H1 (cell line): ENCODE measurements at regions of chr7 and their contacts with region 1.

Region 1: DNA sequence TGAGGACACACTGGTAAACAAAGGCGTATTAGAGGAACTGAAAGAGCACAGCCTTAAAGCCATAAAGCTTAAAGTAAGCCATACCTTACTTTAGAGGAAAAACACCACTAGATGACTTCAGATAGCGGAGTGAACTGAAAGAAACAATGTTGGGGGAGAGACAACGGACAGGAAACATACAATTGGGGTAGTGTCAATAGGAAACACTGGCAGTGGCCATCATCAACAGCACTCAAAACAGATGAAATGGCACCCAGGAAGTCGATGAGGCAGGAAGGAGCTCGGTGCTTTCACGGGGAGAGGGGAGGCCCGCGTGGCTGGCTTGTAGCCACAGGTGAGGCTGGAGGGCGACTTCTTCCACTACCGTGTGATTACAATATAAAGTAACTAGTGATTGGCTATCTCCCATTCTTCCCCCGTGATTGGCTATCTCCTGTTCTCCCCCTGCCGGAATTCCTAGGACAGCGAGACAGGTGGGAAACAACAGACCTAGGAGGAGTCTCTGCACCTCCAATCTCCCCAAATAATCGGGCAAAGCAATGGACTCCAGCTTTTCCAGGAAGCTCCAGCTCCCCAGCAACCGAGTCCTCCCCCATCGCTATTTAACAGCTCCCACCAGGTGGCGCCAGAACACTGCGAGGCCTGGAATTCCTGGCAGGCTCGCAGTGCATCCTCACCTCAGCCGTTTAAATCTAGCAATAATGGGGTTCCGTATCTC is 2.4 kb upstream of the TAS2R38 start:
- DNase-seq: peak; percentile 79 to 96
- H3K4me3 ChIP-seq: peak overlapping the region in 2 of 4 experiments; percentile 2 to 29; a peak in 2 of 8 replicates
- H3K27ac ChIP-seq: no peak overlapping the region
- H3K4me1 ChIP-seq: no peaks in the 10 kb centered on the region; a peak in 1 of 7 replicates
- H3K27me3 ChIP-seq: no peaks in the 10 kb centered on the region
- CTCF ChIP-seq: peak; percentile 84 to 94 (median 91)
- EP300 ChIP-seq: peak in 1 of 2 experiments; percentile 19; a peak in 1 of 3 replicates
- POLR2A ChIP-seq: no peak
- RAD21 ChIP-seq: peak; percentile 98 to 99

Region 2: GRCh38 chr7:141238596-141239243 is 737.2 kb before region 1 on chr7:
- CTCF ChIA-PET with region 1: no interaction called
- POLR2A ChIA-PET with region 1: no interaction called
- DNase-seq: peak in 1 of 2 experiments; percentile 46
- H3K4me3 ChIP-seq: no peak overlapping the region
- H3K27ac ChIP-seq: no peak overlapping the region
- H3K4me1 ChIP-seq: peaks cover 5 to 14% (median 11%) of the 10 kb centered on the region in 4 experiments
- H3K27me3 ChIP-seq: no peaks in the 10 kb centered on the region; a peak in 1 of 7 replicates
- CTCF ChIP-seq: no peak
- EP300 ChIP-seq: no peak
- POLR2A ChIP-seq: no peak
- RAD21 ChIP-seq: no peak

Region 3: DNA sequence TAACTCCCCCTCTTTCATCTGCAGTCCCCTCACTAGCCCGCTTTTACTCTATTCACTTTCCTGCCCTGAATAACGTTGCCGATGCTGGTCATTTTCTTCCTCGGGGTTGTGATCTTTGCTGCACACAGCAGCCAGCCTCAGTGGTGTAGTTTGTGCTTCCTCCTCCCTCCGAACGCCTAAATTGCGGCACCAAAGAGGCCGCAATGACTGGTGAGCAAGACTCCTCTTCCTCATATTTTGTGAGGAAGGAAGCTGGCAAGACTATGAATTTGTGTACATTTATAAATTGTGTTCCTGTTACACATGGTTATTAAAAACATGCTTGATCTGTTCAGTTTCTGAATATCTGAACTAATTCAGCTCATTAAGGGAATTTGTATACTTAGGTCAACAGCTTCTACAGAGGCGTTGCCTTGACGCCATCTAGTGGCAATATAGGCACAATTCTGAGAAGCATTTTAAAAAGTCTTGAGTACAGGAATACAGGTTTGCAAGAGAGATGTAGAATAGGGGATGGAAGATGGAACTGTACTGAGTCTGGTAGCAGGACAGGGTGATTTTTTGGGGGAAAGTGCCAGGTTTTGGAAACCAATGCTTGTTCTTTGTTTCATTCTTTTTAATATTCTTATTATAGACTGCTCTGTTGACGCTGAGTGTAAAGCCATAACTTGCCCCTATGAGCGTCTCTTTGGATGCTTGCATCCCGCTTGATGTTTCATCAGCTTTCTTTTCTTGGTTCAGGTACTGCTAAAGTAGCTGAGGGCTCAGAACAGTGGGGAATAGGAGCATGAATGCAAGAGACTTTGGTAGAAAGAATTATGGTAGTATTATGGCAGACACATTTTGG is 190.0 kb before region 1 on chr7:
- CTCF ChIA-PET with region 1: no interaction called
- POLR2A ChIA-PET with region 1: no interaction called
- DNase-seq: no peak
- H3K4me3 ChIP-seq: no peak overlapping the region
- H3K27ac ChIP-seq: no peak overlapping the region
- H3K4me1 ChIP-seq: no peaks in the 10 kb centered on the region
- H3K27me3 ChIP-seq: no peaks in the 10 kb centered on the region
- CTCF ChIP-seq: peak in 2 of 3 experiments; percentile 55 to 77; a peak in 2 of 4 replicates
- EP300 ChIP-seq: no peak
- POLR2A ChIP-seq: no peak
- RAD21 ChIP-seq: peak; percentile 64 to 70

Region 4: DNA sequence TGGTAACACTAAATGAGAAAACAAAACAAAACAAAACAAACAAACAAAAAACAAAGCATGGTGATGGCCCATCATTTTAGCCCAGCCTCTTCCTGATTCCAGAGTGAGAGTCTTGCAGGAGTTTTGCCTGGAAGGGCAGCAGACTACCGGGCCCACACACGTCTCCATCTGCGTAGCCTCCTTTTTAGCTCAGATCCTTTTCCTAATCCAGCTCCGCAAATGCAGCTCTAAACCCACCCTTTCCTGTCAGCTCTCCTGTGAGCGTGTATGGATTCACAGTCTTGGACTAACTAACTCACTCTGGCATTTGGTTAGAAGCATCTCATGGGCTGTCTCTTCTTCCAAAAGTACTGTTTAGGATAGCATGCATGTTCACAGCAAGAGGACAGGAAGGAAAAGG is 45.8 kb before region 1 on chr7:
- CTCF ChIA-PET with region 1: interaction called, 14 read pairs
- POLR2A ChIA-PET with region 1: no interaction called
- DNase-seq: no peak
- H3K4me3 ChIP-seq: no peak overlapping the region
- H3K27ac ChIP-seq: no peak overlapping the region
- H3K4me1 ChIP-seq: peaks cover 0 to 3% (median 1%) of the 10 kb centered on the region in 4 experiments; a peak in 2 of 7 replicates
- H3K27me3 ChIP-seq: no peaks in the 10 kb centered on the region
- CTCF ChIP-seq: no peak
- EP300 ChIP-seq: no peak
- POLR2A ChIP-seq: no peak
- RAD21 ChIP-seq: no peak

Region 5: DNA sequence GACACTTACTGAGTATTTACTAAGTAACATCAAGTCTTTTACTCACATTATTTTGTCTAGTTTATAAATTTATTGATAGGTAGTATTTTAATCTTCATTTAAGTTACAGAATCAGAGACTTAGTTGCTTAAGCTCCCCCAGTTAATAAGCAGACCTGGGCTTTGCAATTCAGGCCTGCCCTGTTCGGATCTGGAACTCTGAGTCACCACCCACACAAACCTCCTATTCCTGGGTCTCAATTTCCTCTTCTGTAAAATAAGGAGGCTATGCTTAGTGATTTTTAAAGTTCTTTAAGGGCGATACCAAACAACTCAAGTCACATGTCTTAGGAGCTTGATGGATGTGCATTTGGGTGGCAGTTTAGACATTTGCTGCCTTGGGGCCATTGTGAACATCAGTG is 16.2 kb after region 1 on chr7:
- CTCF ChIA-PET with region 1: interaction called, 28 read pairs
- POLR2A ChIA-PET with region 1: no interaction called
- DNase-seq: no peak
- H3K4me3 ChIP-seq: no peak overlapping the region
- H3K27ac ChIP-seq: no peak overlapping the region
- H3K4me1 ChIP-seq: 0 out of 7 replicates have a peak, but pooled peaks cover 0 to 2% (median 0%) of the 10 kb centered on the region in 4 experiments
- H3K27me3 ChIP-seq: no peaks in the 10 kb centered on the region; a peak in 1 of 7 replicates
- CTCF ChIP-seq: no peak
- EP300 ChIP-seq: no peak
- POLR2A ChIP-seq: no peak
- RAD21 ChIP-seq: no peak

Region 6: DNA sequence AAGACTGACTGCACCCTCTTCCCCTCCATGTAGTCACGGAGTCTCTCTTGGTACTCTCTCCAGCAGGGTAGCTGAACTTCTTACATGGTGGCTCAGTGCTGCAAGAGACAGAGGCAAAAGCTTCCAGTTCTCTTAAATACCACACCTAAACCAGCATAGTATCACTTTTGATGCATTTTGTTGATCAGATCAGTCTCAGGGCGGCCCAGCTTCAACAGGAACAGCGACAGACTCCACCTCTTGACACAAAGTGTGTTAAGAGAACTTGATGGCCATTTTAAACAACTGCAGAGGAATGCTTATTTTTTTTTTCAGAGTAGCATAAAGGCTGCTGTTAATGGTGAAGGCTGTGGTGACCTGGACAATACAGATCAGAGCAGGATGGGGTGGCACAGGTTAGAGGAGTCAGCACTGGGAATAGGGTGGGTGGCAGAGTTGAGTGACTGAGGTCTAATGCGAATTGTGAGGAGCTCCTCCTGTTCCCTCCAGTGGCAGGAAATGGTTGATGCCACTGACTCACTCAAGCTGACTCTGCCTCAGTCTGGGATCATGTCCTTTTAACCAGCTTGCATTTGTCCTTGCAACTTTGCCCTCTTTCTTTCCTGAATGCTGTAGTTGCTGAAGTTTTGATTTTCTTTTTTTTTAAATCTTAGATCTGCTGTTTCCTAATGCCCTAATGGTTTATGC is 37.0 kb after region 1 on chr7:
- CTCF ChIA-PET with region 1: interaction called, 72 read pairs
- POLR2A ChIA-PET with region 1: interaction called, 3 read pairs
- DNase-seq: no peak
- H3K4me3 ChIP-seq: no peak overlapping the region
- H3K27ac ChIP-seq: no peak overlapping the region
- H3K4me1 ChIP-seq: no peaks in the 10 kb centered on the region
- H3K27me3 ChIP-seq: no peaks in the 10 kb centered on the region
- CTCF ChIP-seq: peak in 2 of 3 experiments; percentile 43 to 45; a peak in 2 of 4 replicates
- EP300 ChIP-seq: no peak
- POLR2A ChIP-seq: no peak
- RAD21 ChIP-seq: peak; percentile 37 to 49

Region 7: GRCh38 chr7:142030294-142030693 is 54.3 kb after region 1 on chr7:
- CTCF ChIA-PET with region 1: interaction called, 60 read pairs
- POLR2A ChIA-PET with region 1: no interaction called
- DNase-seq: no peak
- H3K4me3 ChIP-seq: no peak overlapping the region
- H3K27ac ChIP-seq: no peak overlapping the region
- H3K4me1 ChIP-seq: no peaks in the 10 kb centered on the region
- H3K27me3 ChIP-seq: no peaks in the 10 kb centered on the region
- CTCF ChIP-seq: peak in 2 of 3 experiments; percentile 17 to 44; a peak in 2 of 4 replicates
- EP300 ChIP-seq: no peak
- POLR2A ChIP-seq: no peak
- RAD21 ChIP-seq: peak; percentile 55 to 59

Region 8: GRCh38 chr7:142088022-142088714 is 112.2 kb after region 1 on chr7:
- CTCF ChIA-PET with region 1: interaction called, 82 read pairs
- POLR2A ChIA-PET with region 1: no interaction called
- DNase-seq: no peak
- H3K4me3 ChIP-seq: no peak overlapping the region
- H3K27ac ChIP-seq: no peak overlapping the region
- H3K4me1 ChIP-seq: no peaks in the 10 kb centered on the region
- H3K27me3 ChIP-seq: no peaks in the 10 kb centered on the region
- CTCF ChIP-seq: no peak
- EP300 ChIP-seq: no peak
- POLR2A ChIP-seq: no peak
- RAD21 ChIP-seq: no peak

Region 9: DNA sequence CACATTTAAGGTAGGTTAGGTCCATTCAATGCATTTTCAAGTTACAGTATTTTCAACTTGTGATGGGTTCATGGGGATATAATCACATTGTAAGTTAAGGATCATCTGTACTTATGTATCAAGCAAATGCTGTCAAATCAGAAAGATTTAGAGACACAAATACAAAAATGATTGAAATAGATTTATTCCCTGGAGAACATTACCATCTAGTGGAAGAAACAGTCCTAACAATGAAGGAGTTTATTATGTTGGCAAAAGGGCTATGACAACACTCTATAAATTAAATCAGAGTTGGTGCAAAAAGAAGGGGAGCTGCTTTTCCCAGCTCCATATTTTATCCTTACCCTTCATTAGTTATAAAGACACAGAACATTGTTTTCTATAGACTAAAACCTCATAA is 212.9 kb after region 1 on chr7:
- CTCF ChIA-PET with region 1: interaction called, 49 read pairs
- POLR2A ChIA-PET with region 1: no interaction called
- DNase-seq: no peak
- H3K4me3 ChIP-seq: no peak overlapping the region
- H3K27ac ChIP-seq: no peak overlapping the region
- H3K4me1 ChIP-seq: no peaks in the 10 kb centered on the region
- H3K27me3 ChIP-seq: no peaks in the 10 kb centered on the region
- CTCF ChIP-seq: peak in 2 of 3 experiments; percentile 14 to 27; a peak in 2 of 4 replicates
- EP300 ChIP-seq: no peak
- POLR2A ChIP-seq: no peak
- RAD21 ChIP-seq: peak; percentile 58 to 67